ENCODE measurements at regions of chr19 and their contacts with region 1.

Region 1: DNA sequence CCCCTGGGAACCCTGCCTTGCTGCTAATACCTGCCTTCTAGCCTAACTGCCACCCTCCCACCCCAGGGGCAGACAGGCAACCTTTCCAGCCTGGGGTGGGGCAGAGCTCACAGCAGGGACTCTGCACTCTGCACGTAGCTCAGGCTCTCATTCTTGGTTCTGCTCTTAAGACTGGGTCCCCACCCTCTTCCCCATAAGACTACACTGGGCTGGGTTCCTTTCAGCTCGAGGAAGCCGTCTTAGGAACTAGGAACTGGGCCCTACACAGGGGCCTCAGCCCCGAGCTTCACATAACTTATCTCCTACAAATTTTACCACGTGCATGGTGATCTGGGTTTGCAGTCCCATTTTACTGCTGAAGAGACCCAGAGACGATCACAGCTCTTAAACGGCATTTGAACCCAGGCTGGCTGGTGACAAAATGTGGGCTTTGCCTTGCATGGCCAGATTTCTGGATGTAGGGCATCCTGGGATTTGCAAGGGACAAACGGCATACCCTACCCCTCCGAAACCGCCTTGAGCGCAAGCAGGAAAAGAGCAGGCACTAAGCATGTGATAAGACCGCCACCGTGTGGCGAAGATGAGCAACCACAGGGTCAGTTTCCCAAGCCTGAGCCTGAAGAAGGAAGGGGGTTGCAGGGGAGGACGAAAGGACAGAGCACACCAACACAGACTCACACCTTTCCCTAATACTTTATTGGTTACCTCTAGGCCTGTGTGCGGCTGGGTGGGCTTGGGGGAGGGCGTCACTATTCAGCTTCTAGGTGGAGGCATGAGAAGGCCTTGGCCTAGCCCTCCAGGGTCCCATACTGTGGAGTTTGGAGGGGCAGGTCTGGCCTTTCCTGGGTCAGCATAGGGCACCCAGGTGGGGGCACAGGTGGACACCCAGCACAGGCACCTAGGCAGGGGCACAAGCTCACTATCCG is 5.1 kb downstream of the JUNB start:
- DNase-seq: no peak
- H3K4me3 ChIP-seq: no peak overlapping the region
- H3K27me3 ChIP-seq: no peaks in the 10 kb centered on the region
- CTCF ChIP-seq: peak; percentile 90

Region 2: DNA sequence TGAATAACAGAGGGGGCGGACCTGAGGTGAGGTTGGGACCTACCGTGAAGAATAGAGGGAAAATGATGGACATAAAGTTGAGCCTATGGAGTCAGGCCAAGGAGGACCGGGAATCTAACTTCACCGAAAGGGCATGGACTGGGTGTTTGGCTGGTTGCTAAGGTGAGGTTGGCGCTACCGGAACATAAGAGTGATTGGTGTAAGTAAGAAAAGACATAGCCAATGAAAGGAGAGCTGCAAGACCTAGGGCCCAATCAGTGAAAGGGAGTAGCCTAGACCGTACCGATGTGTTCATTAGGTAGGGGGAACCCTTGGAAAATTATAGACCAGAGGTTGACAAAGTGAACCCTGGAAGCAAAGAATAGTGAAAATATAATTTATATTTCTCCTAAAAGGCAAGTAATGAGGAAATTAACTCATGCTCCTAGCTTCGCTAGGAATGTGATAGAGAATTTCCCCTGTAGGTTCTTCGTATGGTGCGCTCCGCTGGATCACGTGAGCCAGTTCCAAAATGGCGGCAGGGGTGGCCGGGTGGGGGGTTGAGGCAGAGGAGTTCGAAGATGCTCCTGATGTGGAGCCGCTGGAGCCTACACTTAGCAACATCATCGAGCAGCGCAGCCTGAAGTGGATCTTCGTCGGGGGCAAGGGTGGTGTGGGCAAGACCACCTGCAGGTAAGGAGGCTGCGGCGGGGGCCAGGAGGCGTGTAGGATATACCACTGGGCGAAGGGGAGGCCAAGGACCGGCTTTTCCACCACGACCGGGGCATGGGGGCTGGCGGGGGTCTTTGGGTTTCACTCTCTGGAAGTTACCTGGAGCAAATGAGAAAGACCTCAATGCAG is 59.2 kb before region 1 on chr19 and contains the start of gene GET3:
- CTCF ChIA-PET with region 1: interaction called, 11 read pairs
- POLR2A ChIA-PET with region 1: interaction called, 16 read pairs
- DNase-seq: peak; percentile 100
- H3K4me3 ChIP-seq: peak within 1 kb of the TSS; percentile 87
- H3K27me3 ChIP-seq: no peaks in the 10 kb centered on the region
- CTCF ChIP-seq: no peak
- polyA plus RNA-seq, gene GET3: 163 and 250 TPM in 2 replicates

Region 3: DNA sequence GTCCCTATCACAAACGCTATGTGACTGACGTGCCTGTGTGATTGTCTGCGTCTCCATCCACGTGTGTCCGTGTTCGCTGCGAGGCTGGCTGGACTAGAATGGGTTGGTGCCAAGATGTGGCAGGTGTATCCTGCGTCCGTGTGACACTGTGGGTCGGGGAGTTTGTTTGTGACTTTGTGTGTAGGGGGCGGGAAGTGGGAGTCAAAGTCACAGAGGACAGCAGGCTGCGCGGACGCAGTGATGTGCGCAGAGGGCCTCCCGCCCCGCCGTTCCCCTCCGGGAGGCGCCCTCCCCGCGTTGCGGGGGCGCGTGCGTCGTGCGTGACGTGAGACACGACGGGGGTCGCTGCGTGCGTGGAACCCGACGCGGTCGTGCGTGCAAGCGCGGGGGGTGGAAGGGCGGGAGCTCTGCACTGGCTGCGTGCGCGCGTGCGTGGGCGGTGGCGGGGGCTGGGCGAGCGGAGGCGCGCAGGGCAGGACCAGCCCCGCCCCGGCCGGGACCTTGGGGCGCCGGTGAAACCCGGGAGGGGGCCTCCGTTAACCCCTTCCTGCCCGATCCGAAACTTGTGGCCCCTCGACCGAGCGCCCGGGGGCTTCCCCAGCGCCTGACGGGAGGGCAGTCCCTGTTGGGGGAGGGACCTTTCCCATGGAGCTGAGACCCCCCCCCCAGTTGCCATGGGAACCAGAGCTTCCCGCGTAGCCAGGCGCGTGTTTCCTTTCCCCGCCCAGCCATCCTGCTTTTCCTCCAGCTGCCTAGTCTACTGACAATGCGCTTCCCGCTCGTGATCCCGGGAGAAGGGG is 14.0 kb before region 1 on chr19:
- CTCF ChIA-PET with region 1: interaction called, 874 read pairs
- POLR2A ChIA-PET with region 1: interaction called, 16 read pairs
- DNase-seq: no peak
- H3K4me3 ChIP-seq: peak overlapping the region; percentile 48
- H3K27me3 ChIP-seq: no peaks in the 10 kb centered on the region
- CTCF ChIP-seq: no peak